Naive thymus-derived CD4-positive, alpha-beta T cell (primary cell): ENCODE measurements at regions of chr10 and their contacts with region 1.

Region 1: GRCh38 chr10:109665321-109665720 is 258.0 kb downstream of the XPNPEP1 start:
- DNase-seq: no peak
- ATAC-seq: no peak
- H3K4me3 ChIP-seq: no peak overlapping the region
- H3K4me3 Mint-ChIP-seq: no peak overlapping the region
- H3K27ac ChIP-seq: no peak overlapping the region
- H3K27ac Mint-ChIP-seq: no peak overlapping the region
- H3K4me1 ChIP-seq: no peaks in the 10 kb centered on the region
- H3K4me1 Mint-ChIP-seq: no peaks in the 10 kb centered on the region
- H3K27me3 ChIP-seq: no peaks in the 10 kb centered on the region
- H3K27me3 Mint-ChIP-seq: no peaks in the 10 kb centered on the region

Region 2: GRCh38 chr10:109534193-109534592 is 131.1 kb before region 1 on chr10:
- CTCF ChIA-PET with region 1: no interaction called
- POLR2A ChIA-PET with region 1: no interaction called
- intact Hi-C with region 1: no loop called
- DNase-seq: no peak
- ATAC-seq: no peak
- H3K4me3 ChIP-seq: no peak overlapping the region
- H3K4me3 Mint-ChIP-seq: no peak overlapping the region
- H3K27ac ChIP-seq: no peak overlapping the region
- H3K27ac Mint-ChIP-seq: no peak overlapping the region
- H3K4me1 ChIP-seq: no peaks in the 10 kb centered on the region
- H3K4me1 Mint-ChIP-seq: no peaks in the 10 kb centered on the region
- H3K27me3 ChIP-seq: no peaks in the 10 kb centered on the region
- H3K27me3 Mint-ChIP-seq: no peaks in the 10 kb centered on the region

Region 3: DNA sequence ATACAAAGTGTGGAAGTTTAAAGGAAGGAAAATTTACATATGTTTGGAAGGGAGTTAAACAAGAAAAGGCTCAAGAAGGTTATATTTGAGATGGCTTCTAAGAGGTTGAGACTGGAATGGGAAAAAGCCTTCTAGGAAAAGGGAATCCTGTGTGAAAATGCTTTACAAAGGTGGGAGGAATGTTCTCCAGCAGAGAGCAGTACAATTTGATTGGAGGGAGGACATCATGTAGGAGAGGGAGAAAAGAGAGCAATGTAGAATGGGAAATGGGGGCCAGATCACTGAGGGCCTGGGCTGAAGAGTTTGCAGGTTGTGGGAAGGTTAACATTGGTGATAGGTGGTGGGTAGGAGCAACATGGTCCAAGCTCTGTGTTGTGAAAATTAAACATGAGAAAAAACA is 108.9 kb before region 1 on chr10:
- CTCF ChIA-PET with region 1: no interaction called
- POLR2A ChIA-PET with region 1: no interaction called
- intact Hi-C with region 1: no loop called
- DNase-seq: no peak
- ATAC-seq: no peak
- H3K4me3 ChIP-seq: no peak overlapping the region
- H3K4me3 Mint-ChIP-seq: no peak overlapping the region
- H3K27ac ChIP-seq: no peak overlapping the region
- H3K27ac Mint-ChIP-seq: no peak overlapping the region
- H3K4me1 ChIP-seq: no peaks in the 10 kb centered on the region
- H3K4me1 Mint-ChIP-seq: no peaks in the 10 kb centered on the region
- H3K27me3 ChIP-seq: no peaks in the 10 kb centered on the region
- H3K27me3 Mint-ChIP-seq: peaks cover 0 to 11% (median 0%) of the 10 kb centered on the region in 5 donors

Region 4: GRCh38 chr10:109633846-109634245 is 31.5 kb before region 1 on chr10:
- CTCF ChIA-PET with region 1: no interaction called
- POLR2A ChIA-PET with region 1: no interaction called
- intact Hi-C with region 1: loop called in 1 of 2 experiments (anchors 1 kb)
- DNase-seq: no peak
- ATAC-seq: no peak
- H3K4me3 ChIP-seq: no peak overlapping the region
- H3K4me3 Mint-ChIP-seq: no peak overlapping the region
- H3K27ac ChIP-seq: no peak overlapping the region
- H3K27ac Mint-ChIP-seq: no peak overlapping the region
- H3K4me1 ChIP-seq: no peaks in the 10 kb centered on the region
- H3K4me1 Mint-ChIP-seq: no peaks in the 10 kb centered on the region
- H3K27me3 ChIP-seq: no peaks in the 10 kb centered on the region
- H3K27me3 Mint-ChIP-seq: no peaks in the 10 kb centered on the region

Region 5: GRCh38 chr10:109689785-109690184 is 24.5 kb after region 1 on chr10:
- CTCF ChIA-PET with region 1: no interaction called
- POLR2A ChIA-PET with region 1: no interaction called
- intact Hi-C with region 1: no loop called
- DNase-seq: no peak
- ATAC-seq: no peak
- H3K4me3 ChIP-seq: no peak overlapping the region
- H3K4me3 Mint-ChIP-seq: no peak overlapping the region
- H3K27ac ChIP-seq: no peak overlapping the region
- H3K27ac Mint-ChIP-seq: no peak overlapping the region
- H3K4me1 ChIP-seq: no peaks in the 10 kb centered on the region
- H3K4me1 Mint-ChIP-seq: no peaks in the 10 kb centered on the region
- H3K27me3 ChIP-seq: no peaks in the 10 kb centered on the region
- H3K27me3 Mint-ChIP-seq: peaks cover 0 to 13% (median 8%) of the 10 kb centered on the region in 5 donors

Region 6: GRCh38 chr10:109784236-109784635 is 118.9 kb after region 1 on chr10:
- CTCF ChIA-PET with region 1: no interaction called
- POLR2A ChIA-PET with region 1: no interaction called
- intact Hi-C with region 1: no loop called
- DNase-seq: no peak
- ATAC-seq: no peak
- H3K4me3 ChIP-seq: no peak overlapping the region
- H3K4me3 Mint-ChIP-seq: no peak overlapping the region
- H3K27ac ChIP-seq: no peak overlapping the region
- H3K27ac Mint-ChIP-seq: no peak overlapping the region
- H3K4me1 ChIP-seq: no peaks in the 10 kb centered on the region
- H3K4me1 Mint-ChIP-seq: no peaks in the 10 kb centered on the region
- H3K27me3 ChIP-seq: no peaks in the 10 kb centered on the region
- H3K27me3 Mint-ChIP-seq: peaks cover 0 to 35% (median 19%) of the 10 kb centered on the region in 5 donors